IMR-90 (cell line): ENCODE measurements at regions of chr1 and their contacts with region 1.

Region 1: GRCh38 chr1:219066631-219067349 is 106.9 kb upstream of the LYPLAL1 start:
- DNase-seq: peak; percentile 59
- ATAC-seq: peak; percentile 79
- H3K4me3 ChIP-seq: no peak overlapping the region
- H3K27ac ChIP-seq: peak overlapping the region; percentile 26; the same call in 1 of the 2 replicates
- H3K4me1 ChIP-seq: peaks cover 2% of the 10 kb centered on the region
- H3K27me3 ChIP-seq: no peaks in the 10 kb centered on the region
- CTCF ChIP-seq: peak; percentile 74
- POLR2A ChIP-seq: no peak
- RAD21 ChIP-seq: peak; percentile 85

Region 2: DNA sequence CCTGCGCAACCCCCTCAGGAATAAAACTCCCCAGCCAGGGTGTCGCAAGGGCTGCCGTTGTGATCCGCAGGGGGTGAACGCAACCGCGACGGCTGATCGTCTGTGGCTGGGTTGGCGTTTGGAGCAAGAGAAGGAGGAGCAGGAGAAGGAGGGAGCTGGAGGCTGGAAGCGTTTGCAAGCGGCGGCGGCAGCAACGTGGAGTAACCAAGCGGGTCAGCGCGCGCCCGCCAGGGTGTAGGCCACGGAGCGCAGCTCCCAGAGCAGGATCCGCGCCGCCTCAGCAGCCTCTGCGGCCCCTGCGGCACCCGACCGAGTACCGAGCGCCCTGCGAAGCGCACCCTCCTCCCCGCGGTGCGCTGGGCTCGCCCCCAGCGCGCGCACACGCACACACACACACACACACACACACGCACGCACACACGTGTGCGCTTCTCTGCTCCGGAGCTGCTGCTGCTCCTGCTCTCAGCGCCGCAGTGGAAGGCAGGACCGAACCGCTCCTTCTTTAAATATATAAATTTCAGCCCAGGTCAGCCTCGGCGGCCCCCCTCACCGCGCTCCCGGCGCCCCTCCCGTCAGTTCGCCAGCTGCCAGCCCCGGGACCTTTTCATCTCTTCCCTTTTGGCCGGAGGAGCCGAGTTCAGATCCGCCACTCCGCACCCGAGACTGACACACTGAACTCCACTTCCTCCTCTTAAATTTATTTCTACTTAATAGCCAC is 721.0 kb before region 1 on chr1:
- CTCF ChIA-PET with region 1: interaction called, 4 read pairs
- POLR2A ChIA-PET with region 1: interaction called, 3 read pairs
- dilution Hi-C with region 1: no loop called
- in situ Hi-C with region 1: loop called (anchors 5 kb)
- intact Hi-C with region 1: loop called (anchors 2 kb)
- DNase-seq: peak; percentile 70
- ATAC-seq: peak; percentile 56
- H3K4me3 ChIP-seq: peak overlapping the region; percentile 81
- H3K27ac ChIP-seq: peak overlapping the region; percentile 76
- H3K4me1 ChIP-seq: peaks cover 4% of the 10 kb centered on the region
- H3K27me3 ChIP-seq: no peaks in the 10 kb centered on the region
- CTCF ChIP-seq: no peak
- POLR2A ChIP-seq: no peak
- RAD21 ChIP-seq: no peak

Region 3: GRCh38 chr1:218499011-218499691 is 567.6 kb before region 1 on chr1:
- CTCF ChIA-PET with region 1: interaction called, 3 read pairs
- POLR2A ChIA-PET with region 1: no interaction called
- dilution Hi-C with region 1: no loop called
- in situ Hi-C with region 1: no loop called
- intact Hi-C with region 1: loop called (anchors 2 kb)
- DNase-seq: peak; percentile 79
- ATAC-seq: peak; percentile 31
- H3K4me3 ChIP-seq: peak overlapping the region; percentile 52; the same call in 1 of the 2 replicates
- H3K27ac ChIP-seq: peak overlapping the region; percentile 77
- H3K4me1 ChIP-seq: peaks cover 6% of the 10 kb centered on the region
- H3K27me3 ChIP-seq: no peaks in the 10 kb centered on the region
- CTCF ChIP-seq: no peak
- POLR2A ChIP-seq: no peak; the same call in none of the 2 replicates
- RAD21 ChIP-seq: no peak; the same call in 1 of the 2 replicates

Region 4: GRCh38 chr1:218851586-218851985 is 215.2 kb before region 1 on chr1:
- CTCF ChIA-PET with region 1: no interaction called
- POLR2A ChIA-PET with region 1: no interaction called
- dilution Hi-C with region 1: no loop called
- in situ Hi-C with region 1: no loop called
- intact Hi-C with region 1: loop called (anchors 5 kb)
- DNase-seq: peak; percentile 72
- ATAC-seq: peak; percentile 25; the same call in 1 of the 2 replicates
- H3K4me3 ChIP-seq: no peak overlapping the region
- H3K27ac ChIP-seq: no peak overlapping the region
- H3K4me1 ChIP-seq: no peaks in the 10 kb centered on the region
- H3K27me3 ChIP-seq: no peaks in the 10 kb centered on the region
- CTCF ChIP-seq: no peak
- POLR2A ChIP-seq: no peak
- RAD21 ChIP-seq: no peak

Region 5: GRCh38 chr1:218946147-218946546 is 120.6 kb before region 1 on chr1:
- CTCF ChIA-PET with region 1: no interaction called
- POLR2A ChIA-PET with region 1: no interaction called
- dilution Hi-C with region 1: no loop called
- in situ Hi-C with region 1: no loop called
- intact Hi-C with region 1: no loop called
- DNase-seq: no peak
- ATAC-seq: no peak
- H3K4me3 ChIP-seq: no peak overlapping the region
- H3K27ac ChIP-seq: no peak overlapping the region
- H3K4me1 ChIP-seq: no peaks in the 10 kb centered on the region
- H3K27me3 ChIP-seq: no peaks in the 10 kb centered on the region
- CTCF ChIP-seq: no peak
- POLR2A ChIP-seq: no peak
- RAD21 ChIP-seq: no peak

Region 6: DNA sequence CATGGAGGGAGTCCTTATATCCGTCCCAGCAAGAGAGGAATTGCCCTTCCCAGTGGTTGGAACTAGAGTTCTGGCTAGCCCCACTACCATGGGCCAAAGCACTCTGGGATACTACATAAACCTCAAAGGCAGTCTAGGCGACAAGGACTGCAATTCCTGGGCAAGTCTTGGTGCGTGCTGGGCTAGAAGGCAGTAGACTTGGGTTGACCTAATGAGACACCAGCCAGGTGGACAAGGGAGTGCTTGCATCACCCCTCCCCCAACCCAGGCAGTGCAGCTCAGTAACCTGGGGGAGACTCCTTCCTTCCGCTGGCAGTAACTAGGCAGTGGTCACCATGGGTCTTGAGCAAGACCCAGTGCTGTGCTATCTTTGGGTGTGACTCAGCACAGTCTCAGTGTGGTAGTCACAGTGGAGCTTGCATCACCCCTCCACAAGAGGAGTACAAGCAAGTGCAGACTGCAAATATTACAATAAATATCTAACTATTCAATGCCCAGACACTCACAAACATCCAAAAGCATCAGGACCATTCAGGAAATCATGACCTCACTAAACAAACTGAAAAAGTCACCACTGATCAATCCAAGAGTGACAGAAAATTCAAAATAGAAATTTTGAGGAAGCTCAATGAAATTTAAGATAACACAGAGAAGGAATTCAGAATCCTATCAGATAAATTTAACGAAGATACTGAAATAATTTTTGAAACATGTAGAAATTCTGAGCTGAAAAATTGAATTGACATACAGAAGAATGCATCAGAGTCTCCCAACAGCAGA is 22.2 kb after region 1 on chr1:
- CTCF ChIA-PET with region 1: no interaction called
- POLR2A ChIA-PET with region 1: no interaction called
- dilution Hi-C with region 1: no loop called
- in situ Hi-C with region 1: no loop called
- intact Hi-C with region 1: no loop called
- DNase-seq: peak; percentile 97
- ATAC-seq: peak; percentile 93
- H3K4me3 ChIP-seq: no peak overlapping the region
- H3K27ac ChIP-seq: no peak overlapping the region
- H3K4me1 ChIP-seq: peaks cover 6% of the 10 kb centered on the region
- H3K27me3 ChIP-seq: no peaks in the 10 kb centered on the region
- CTCF ChIP-seq: no peak
- POLR2A ChIP-seq: no peak
- RAD21 ChIP-seq: 0 out of 2 replicates have a peak, but pooled peaks have one; percentile 14

Region 7: DNA sequence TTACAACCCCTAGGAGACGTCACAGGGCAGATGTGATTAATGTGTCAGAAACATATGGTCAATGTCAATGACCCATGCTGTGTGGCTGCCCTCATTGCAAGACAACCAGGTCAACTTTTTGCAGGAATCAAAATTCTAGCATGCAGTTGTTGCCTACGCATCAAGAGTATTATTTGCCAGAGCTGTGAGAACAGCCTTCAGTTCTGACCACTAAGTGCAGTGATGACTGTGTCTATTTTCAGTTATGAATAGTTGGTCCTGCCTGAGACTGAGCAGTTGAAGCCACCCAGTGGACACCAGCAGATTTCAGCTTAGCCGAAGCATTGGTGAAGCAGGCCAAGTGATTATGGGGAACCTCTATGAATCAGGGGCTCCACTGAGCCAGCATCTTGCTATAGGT is 154.2 kb after region 1 on chr1:
- CTCF ChIA-PET with region 1: no interaction called
- POLR2A ChIA-PET with region 1: no interaction called
- dilution Hi-C with region 1: no loop called
- in situ Hi-C with region 1: no loop called
- intact Hi-C with region 1: no loop called
- DNase-seq: peak; percentile 20
- ATAC-seq: peak; percentile 27; the same call in 1 of the 2 replicates
- H3K4me3 ChIP-seq: no peak overlapping the region
- H3K27ac ChIP-seq: no peak overlapping the region
- H3K4me1 ChIP-seq: no peaks in the 10 kb centered on the region
- H3K27me3 ChIP-seq: no peaks in the 10 kb centered on the region
- CTCF ChIP-seq: no peak; the same call in 1 of the 2 replicates
- POLR2A ChIP-seq: no peak
- RAD21 ChIP-seq: no peak

Region 8: GRCh38 chr1:219660666-219661463 is 594.1 kb after region 1 on chr1:
- CTCF ChIA-PET with region 1: no interaction called
- POLR2A ChIA-PET with region 1: no interaction called
- dilution Hi-C with region 1: no loop called
- in situ Hi-C with region 1: no loop called
- intact Hi-C with region 1: loop called (anchors 5 kb)
- DNase-seq: peak; percentile 88
- ATAC-seq: peak; percentile 92
- H3K4me3 ChIP-seq: no peak overlapping the region
- H3K27ac ChIP-seq: peak overlapping the region; percentile 60; the same call in 1 of the 2 replicates
- H3K4me1 ChIP-seq: peaks cover 6% of the 10 kb centered on the region; the same call in 1 of the 2 replicates
- H3K27me3 ChIP-seq: no peaks in the 10 kb centered on the region
- CTCF ChIP-seq: peak; percentile 89
- POLR2A ChIP-seq: 0 out of 2 replicates have a peak, but pooled peaks have one; percentile 27
- RAD21 ChIP-seq: peak; percentile 81